Activated naive CD4-positive, alpha-beta T cell treated with anti-CD3 and anti-CD28 coated beads, Interleukin-2, amount 10 ng/mL, durations not matched to agents 7 days and 5 days (primary cell): ENCODE measurements at regions of chr1 and their contacts with region 1.

Region 1: GRCh38 chr1:204791453-204792353 is 79.0 kb upstream of the NFASC start:
- DNase-seq: peak; percentile 90
- H3K4me3 Mint-ChIP-seq: no peak overlapping the region
- H3K27ac Mint-ChIP-seq: no peak overlapping the region
- H3K4me1 Mint-ChIP-seq: peaks cover 6% of the 10 kb centered on the region
- H3K27me3 Mint-ChIP-seq: peaks cover 49% of the 10 kb centered on the region

Region 2: DNA sequence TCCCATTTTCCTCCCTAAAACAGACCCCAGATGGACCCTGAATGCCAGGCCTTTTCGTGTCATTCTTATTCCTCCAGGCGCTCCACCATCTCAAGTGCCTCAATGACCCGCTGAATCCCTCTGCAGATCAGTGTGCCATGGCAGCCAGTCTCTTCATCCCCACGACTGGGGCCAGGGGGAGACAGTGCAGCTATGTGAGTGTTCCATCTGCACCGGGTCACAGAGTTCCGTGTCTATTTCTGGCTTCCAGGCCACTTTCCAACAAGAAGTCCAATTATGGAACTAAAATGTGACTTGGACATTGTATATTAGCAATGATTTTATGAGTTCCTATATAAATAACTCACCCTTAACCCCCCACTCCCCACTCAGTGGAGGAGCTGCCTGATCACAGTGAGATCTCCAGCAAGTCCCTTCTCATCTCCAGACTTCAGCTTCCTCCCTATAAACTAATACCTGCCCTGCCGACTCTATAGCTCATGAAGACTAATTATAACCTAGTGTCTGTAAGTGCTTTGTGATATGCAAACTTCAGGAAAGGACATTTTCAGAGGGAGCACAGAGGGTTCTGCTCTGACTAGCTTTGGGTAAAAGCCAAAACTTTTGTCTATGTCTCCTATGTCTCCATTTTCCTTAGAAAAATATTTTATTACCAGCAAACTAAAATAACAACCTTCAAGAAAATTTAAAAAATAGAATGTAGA is 22.6 kb after region 1 on chr1:
- CTCF ChIA-PET with region 1: interaction called, 15 read pairs
- DNase-seq: no peak
- H3K4me3 Mint-ChIP-seq: no peak overlapping the region
- H3K27ac Mint-ChIP-seq: no peak overlapping the region
- H3K4me1 Mint-ChIP-seq: no peaks in the 10 kb centered on the region
- H3K27me3 Mint-ChIP-seq: peaks cover 46% of the 10 kb centered on the region

Region 3: GRCh38 chr1:204819495-204819894 is 27.8 kb after region 1 on chr1:
- CTCF ChIA-PET with region 1: interaction called, 10 read pairs
- DNase-seq: no peak
- H3K4me3 Mint-ChIP-seq: no peak overlapping the region
- H3K27ac Mint-ChIP-seq: no peak overlapping the region
- H3K4me1 Mint-ChIP-seq: no peaks in the 10 kb centered on the region
- H3K27me3 Mint-ChIP-seq: peaks cover 33% of the 10 kb centered on the region